ENCODE measurements at regions of chr3 and their contacts with region 1.

Region 1: DNA sequence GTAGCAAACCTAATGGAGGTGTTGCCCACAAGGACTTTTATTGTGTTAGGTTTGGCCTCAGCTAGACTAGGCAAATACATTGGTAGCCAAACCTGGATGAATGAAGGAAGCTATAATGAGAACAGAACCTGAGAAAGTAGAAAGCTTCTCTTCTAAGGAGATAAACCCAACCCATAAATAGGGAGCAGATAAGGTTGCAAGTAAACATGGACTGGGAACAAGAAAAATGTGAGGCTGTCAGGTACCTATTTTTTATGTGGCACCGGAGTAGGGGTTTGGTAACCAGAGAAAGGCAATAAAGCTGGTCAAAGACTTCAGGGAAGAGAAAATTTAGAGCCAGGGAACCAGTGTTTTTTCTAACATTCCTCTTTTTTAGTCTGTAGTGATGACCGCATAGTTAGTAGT is 25.0 kb downstream of the ZNF654 start:
- DNase-seq: peak in 4 of 5 donors; percentile 30 to 90 (median 73)
- H3K4me3 ChIP-seq: no peak overlapping the region
- H3K27ac ChIP-seq: no peak overlapping the region
- H3K4me1 ChIP-seq: no peaks in the 10 kb centered on the region
- H3K27me3 ChIP-seq: no peaks in the 10 kb centered on the region
- CTCF ChIP-seq: no peak

Region 2: GRCh38 chr3:87997298-87997697 is 86.8 kb before region 1 on chr3:
- intact Hi-C with region 1: no loop called
- DNase-seq: peak in 1 of 5 donors; percentile 12
- H3K4me3 ChIP-seq: peak overlapping the region in 1 of 3 donors; percentile 9
- H3K27ac ChIP-seq: no peak overlapping the region
- H3K4me1 ChIP-seq: no peaks in the 10 kb centered on the region
- H3K27me3 ChIP-seq: no peaks in the 10 kb centered on the region
- CTCF ChIP-seq: no peak

Region 3: DNA sequence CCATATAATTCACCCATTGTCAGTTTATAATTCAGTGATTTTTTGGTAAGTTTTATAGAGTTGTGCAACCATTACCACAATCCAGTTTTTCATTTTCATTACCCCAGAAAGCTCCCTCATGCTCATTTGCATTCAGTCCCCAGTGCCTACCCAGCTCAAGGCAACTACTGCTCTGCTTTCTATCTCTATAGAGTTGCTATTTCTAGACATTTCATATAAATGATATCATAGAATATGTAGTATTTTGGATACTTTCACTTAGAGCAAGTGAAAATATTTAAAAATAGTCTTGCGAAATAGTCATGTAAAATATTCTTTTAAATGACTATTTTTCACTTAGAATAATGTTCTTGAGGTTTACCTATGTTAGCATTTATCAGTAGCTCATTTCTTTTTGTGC is 17.0 kb after region 1 on chr3:
- intact Hi-C with region 1: loop called (anchors 2 kb)
- DNase-seq: no peak
- H3K4me3 ChIP-seq: no peak overlapping the region
- H3K27ac ChIP-seq: no peak overlapping the region
- H3K4me1 ChIP-seq: no peaks in the 10 kb centered on the region
- H3K27me3 ChIP-seq: no peaks in the 10 kb centered on the region
- CTCF ChIP-seq: no peak

Region 4: DNA sequence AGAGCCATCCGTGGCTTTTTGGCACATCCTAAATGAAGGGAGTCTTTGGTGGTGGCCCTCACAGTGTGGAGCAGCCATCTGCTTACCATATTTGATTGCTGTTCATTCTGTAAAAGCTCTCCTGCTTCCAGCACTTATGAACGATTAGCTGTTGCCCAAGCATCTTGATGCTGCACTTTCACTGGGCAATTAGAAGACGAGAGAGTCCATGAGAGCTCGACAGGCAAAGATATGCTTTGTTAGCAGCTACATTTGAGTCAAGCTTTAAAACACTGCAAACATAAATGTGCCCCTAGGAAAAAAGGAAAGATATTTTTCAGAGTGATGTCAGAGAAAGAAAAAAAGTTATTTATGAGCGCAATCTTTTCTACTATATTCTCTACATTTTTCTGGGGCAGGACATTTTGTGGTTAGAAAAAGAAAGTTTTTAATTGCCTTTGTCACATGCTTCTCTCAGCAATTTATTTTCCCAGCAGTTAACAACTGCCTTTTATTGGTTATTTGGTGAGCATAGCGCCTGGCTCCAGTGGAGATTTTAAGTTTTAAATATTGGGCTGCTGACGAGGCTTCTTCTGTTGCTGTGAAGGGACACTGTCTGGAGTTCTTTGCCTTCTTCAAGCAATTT is 534.0 kb after region 1 on chr3:
- intact Hi-C with region 1: no loop called
- DNase-seq: no peak
- H3K4me3 ChIP-seq: no peak overlapping the region
- H3K27ac ChIP-seq: no peak overlapping the region
- H3K4me1 ChIP-seq: no peaks in the 10 kb centered on the region
- H3K27me3 ChIP-seq: no peaks in the 10 kb centered on the region
- CTCF ChIP-seq: no peak